ENCODE measurements at regions of chr20 and their contacts with region 1.

Region 1: DNA sequence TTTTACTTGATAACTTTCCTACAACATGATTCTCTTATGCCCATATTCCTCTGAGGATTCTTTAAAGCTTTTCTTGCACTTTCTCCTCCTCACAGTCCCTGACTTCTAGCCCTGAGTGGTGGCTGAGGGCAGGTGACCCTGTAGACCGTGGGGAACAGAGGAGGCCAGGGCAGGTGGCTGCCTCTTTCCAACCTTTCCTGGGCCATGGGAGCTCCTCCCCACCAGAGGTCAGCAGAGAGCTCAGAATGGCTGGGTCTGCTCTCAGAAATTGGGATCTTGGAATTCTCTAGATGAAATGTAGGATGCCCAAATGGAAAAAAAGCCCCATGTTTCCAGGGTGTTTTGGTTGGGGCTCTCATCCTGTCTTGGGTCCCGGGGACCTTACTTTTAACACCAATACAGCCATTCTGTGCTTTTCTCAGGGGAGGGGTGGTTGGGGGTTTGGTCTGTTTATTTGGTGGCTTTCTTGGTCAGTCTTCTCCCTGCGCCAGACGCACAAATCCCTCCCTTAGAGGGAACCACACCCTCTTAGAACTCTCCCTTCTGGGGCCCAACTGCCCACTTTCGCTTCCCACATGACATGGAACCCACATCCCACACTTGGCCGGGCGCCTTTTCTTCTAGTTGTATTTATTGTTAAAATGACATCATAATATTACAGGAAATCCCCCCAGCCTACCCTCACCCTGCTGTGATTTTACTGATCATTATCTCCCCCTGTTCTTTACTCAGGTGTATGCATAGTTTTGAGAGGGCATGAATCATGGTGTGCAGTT is 17.9 kb downstream of the GNAS start:
- DNase-seq: peak; percentile 91
- H3K4me3 Mint-ChIP-seq: no peak overlapping the region
- H3K27ac Mint-ChIP-seq: no peak overlapping the region
- H3K4me1 Mint-ChIP-seq: peaks cover 21% of the 10 kb centered on the region
- H3K27me3 Mint-ChIP-seq: no peaks in the 10 kb centered on the region
- CTCF ChIP-seq: peak; percentile 96

Region 2: GRCh38 chr20:59032023-59032712 is 161.7 kb after region 1 on chr20 and contains the start of gene ATP5F1E:
- CTCF ChIA-PET with region 1: interaction called, 11 read pairs
- intact Hi-C with region 1: loop called (anchors 5 kb)
- DNase-seq: peak; percentile 100
- H3K4me3 Mint-ChIP-seq: peak within 1 kb of the TSS; percentile 95
- H3K27ac Mint-ChIP-seq: peak within 1 kb of the TSS; percentile 91
- H3K4me1 Mint-ChIP-seq: peaks cover 50% of the 10 kb centered on the region
- H3K27me3 Mint-ChIP-seq: no peaks in the 10 kb centered on the region
- CTCF ChIP-seq: no peak
- total RNA-seq, gene ATP5F1E: 108 and 116 TPM in 2 replicates

Region 3: DNA sequence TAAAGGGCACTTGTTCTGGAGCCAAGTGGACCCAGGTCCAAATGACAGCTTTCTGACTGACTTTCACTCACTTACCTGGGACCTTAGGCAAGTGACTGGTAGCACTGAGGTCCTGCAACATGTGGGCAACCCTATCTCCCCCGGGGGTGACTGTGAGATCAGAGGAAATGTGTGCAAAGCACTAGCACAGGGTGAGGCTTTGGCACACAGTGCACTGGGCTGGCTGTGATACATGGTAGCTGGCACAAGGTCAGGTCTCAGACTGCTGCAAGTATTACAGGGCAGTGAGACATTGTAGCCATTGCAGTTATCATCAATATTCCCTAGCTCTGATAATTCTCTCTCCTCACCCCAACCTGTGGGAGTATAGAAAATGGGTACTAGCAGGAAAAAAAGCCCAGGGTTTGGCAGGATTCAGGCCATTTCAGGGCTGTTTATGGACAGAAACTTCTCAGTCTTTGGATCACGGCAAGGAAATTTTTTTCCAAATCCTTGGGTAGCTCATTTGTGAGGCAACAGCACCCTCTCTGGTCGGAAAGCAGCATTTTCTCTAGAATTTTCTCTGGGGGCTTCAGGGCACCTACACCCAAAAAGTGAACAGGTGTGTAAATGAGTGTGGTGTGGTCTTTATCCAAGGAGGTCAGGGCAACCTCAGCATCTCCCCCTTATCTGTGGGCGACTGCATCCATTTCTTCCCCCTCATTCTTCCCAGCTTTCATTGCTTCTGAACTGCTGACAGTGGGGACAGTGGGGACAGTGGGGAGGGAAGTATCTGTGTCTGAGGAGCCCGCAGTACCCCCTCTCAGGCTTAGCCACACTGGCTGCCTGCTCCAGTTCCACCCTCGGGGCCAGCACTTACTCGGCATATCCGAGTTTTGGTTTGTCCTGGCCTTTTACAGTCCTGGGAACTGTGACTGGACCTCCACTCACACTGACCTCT is 585.2 kb after region 1 on chr20:
- CTCF ChIA-PET with region 1: interaction called, 11 read pairs
- intact Hi-C with region 1: loop called (anchors 5 kb)
- DNase-seq: peak; percentile 34
- H3K4me3 Mint-ChIP-seq: no peak overlapping the region
- H3K27ac Mint-ChIP-seq: no peak overlapping the region
- H3K4me1 Mint-ChIP-seq: no peaks in the 10 kb centered on the region
- H3K27me3 Mint-ChIP-seq: peaks cover 100% of the 10 kb centered on the region
- CTCF ChIP-seq: peak; percentile 82